Left colon (tissue), 2 donors: ENCODE measurements at regions of chr6 and their contacts with region 1.

Region 1: GRCh38 chr6:112180095-112180820 is 74.1 kb downstream of the LAMA4 start:
- DNase-seq: peak in 1 of 2 donors; percentile 31
- ATAC-seq: peak; percentile 46

Region 2: GRCh38 chr6:111238464-111239119 is 941.7 kb before region 1 on chr6:
- intact Hi-C with region 1: no loop called
- DNase-seq: no peak
- ATAC-seq: no peak

Region 3: DNA sequence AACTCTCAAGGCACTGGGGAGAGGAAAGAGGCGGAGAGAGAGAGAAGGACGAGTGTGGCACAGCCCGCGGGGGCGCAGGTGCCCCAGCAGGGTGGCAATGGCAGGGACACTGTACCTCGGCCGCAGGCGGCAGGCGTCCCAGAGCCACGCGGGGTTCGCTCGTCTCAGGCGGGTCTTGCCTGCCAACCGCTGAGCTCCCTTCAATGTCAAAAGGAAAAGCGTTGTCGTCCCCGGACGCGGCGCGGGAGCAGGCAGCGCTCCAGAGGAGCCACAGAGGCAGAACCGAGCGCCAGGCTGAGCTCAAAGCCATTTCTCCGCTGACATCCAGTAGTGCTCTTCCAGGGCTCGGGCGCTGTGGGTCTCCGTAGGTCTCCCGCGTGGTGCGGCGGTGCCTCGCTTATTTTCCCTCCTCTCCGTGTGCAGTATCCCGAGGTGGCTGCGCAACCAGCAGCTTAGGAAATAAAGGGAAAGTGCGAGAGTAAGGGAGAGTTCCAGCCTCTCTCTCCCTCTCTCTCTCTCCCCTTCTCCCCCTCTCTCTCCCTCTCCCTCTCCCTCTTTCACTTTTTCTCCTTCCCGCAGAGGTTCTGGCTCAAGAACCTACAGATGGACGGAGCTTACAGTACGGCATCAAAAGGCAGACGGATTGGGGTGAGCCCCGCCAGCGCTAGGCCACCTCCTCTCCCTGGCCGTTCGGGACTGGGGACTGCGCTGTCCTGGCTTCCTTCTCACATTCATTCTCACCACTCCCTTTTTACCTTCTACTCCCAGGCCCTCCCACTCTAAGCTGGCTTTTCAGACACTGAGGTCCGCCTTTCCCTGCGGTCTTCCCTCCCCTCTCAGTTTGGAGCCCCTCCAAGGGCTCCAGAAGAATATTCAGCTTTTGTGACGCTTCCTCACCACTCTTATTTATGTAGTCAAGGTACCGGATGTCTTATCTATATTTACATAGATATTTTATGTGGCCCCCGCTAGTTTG is 73.9 kb after region 1 on chr6 and contains the start of gene LAMA4:
- intact Hi-C with region 1: loop called in 1 of 2 experiments (anchors 10 kb)
- DNase-seq: peak in 1 of 2 donors; percentile 18
- ATAC-seq: peak; percentile 36
- total RNA-seq, gene LAMA4: 12.4 to 31.8 TPM

Region 4: DNA sequence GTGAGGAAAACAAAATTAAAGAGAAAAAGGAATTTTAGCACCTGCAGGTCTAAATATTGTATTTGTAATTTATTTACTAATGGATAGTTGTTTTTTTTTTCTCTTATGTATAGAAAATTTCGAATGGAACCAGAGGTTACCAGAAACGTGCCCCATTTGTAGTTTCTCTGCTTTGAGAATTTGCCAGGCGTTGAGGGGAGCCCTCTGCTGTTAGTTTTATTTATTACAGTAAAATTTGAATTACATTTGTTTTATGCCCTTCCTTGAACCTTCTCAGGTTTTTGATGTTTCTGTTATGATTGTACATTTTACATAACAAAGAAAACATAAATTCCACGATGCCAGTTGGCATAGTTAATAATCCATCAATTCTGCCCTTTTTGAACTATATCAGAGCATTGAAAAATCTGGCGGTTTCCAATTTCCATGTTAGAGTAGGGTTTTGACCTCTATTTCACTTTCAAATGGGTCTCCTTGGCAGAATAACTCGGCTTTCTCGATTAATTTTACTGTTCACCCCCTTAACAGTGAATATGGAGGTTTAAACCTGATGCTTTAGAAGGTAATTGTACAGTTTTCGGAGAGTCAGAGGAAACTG is 131.8 kb after region 1 on chr6:
- intact Hi-C with region 1: loop called in 1 of 2 experiments (anchors 5 kb)
- DNase-seq: no peak
- ATAC-seq: no peak